Transverse colon (tissue), 4 donors: ENCODE measurements at regions of chr20 and their contacts with region 1.

Region 1: DNA sequence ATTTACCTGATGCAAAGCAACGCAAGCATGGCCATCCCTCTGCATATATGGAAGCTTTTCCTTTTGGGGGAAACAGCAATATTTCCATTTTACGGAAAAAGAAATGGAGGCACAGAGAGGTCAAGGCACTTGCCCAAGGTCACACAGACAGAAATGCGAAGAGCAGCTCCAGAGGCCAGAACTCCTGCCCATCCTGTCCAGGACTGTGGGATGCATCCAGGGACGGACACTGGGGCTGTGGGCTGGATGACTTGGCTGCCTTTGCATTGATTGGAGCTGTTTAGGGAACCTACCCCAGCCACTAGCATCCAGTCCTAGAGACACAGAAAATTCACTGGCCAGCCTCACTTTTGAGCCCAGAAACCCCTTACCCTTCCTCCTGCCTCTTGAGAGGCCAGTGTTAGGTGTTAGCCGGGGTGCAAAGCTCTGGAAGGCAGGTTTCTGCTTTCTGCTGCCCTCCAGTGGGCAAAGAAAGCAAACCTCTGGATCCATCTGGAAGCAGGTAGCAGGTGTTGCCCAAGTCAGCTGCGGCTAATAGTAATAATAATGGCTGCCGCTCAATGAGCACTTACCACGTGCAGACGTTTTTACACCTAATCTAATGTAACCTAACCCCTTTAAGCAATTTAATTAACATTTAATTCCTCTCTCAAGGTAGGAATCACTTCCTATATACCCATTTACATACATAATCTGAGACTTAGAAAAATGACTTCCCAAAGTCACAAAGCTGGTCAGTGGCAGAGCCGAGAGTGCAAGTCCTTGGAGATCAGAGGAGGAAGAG is 31.7 kb upstream of the CCN5 start:
- DNase-seq: peak; percentile 56
- H3K4me3 ChIP-seq: no peak overlapping the region
- H3K27ac ChIP-seq: no peak overlapping the region
- H3K4me1 ChIP-seq: peaks cover 0 to 9% (median 0%) of the 10 kb centered on the region in 4 donors
- H3K27me3 ChIP-seq: no peaks in the 10 kb centered on the region
- CTCF ChIP-seq: peak; percentile 28 to 66 (median 42)
- EP300 ChIP-seq: no peak
- POLR2A ChIP-seq: no peak

Region 2: GRCh38 chr20:44733341-44734069 is 50.0 kb after region 1 on chr20:
- in situ Hi-C with region 1: loop called (anchors 5 kb)
- intact Hi-C with region 1: loop called (anchors 2 kb)
- DNase-seq: peak; percentile 64
- H3K4me3 ChIP-seq: no peak overlapping the region
- H3K27ac ChIP-seq: no peak overlapping the region
- H3K4me1 ChIP-seq: peaks cover 0 to 6% (median 3%) of the 10 kb centered on the region in 4 donors
- H3K27me3 ChIP-seq: no peaks in the 10 kb centered on the region
- CTCF ChIP-seq: peak; percentile 80 to 87 (median 85)
- EP300 ChIP-seq: no peak
- POLR2A ChIP-seq: no peak

Region 3: GRCh38 chr20:44738813-44739477 is 55.5 kb after region 1 on chr20:
- in situ Hi-C with region 1: loop called (anchors 5 kb)
- intact Hi-C with region 1: no loop called
- DNase-seq: peak; percentile 42
- H3K4me3 ChIP-seq: no peak overlapping the region
- H3K27ac ChIP-seq: no peak overlapping the region
- H3K4me1 ChIP-seq: no peaks in the 10 kb centered on the region
- H3K27me3 ChIP-seq: peaks cover 6% of the 10 kb centered on the region
- CTCF ChIP-seq: no peak
- EP300 ChIP-seq: no peak
- POLR2A ChIP-seq: no peak

Region 4: DNA sequence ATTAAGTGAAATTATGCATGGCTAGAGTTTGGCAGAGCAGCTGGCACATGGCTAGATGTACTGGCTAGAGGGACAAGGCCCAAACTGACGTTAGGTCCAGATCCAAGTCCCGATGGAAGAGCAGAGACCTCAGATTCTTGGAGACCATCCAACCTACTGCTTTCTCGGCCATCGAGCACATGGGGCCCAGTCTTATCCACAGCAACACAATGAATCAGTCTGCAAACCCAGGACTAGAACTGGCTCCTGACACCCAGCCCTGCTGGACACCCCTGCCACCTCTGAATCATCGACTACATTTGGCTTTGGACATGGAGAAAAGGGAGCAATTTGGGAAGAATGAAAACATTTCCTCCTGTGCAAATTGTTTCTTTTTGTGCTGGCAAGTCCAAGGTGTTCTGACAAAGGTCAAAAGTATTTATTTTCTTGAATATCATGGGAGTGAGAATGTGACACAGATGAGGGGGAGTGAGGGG is 178.1 kb after region 1 on chr20:
- in situ Hi-C with region 1: loop called (anchors 5 to 25 kb)
- intact Hi-C with region 1: loop called (anchors 5 kb)
- DNase-seq: no peak
- H3K4me3 ChIP-seq: no peak overlapping the region
- H3K27ac ChIP-seq: no peak overlapping the region
- H3K4me1 ChIP-seq: peaks cover 0 to 25% (median 1%) of the 10 kb centered on the region in 4 donors
- H3K27me3 ChIP-seq: no peaks in the 10 kb centered on the region
- CTCF ChIP-seq: no peak
- EP300 ChIP-seq: no peak
- POLR2A ChIP-seq: no peak

Region 5: GRCh38 chr20:44866703-44867335 is 183.4 kb after region 1 on chr20:
- in situ Hi-C with region 1: loop called (anchors 5 to 25 kb)
- intact Hi-C with region 1: loop called (anchors 5 kb)
- DNase-seq: no peak
- H3K4me3 ChIP-seq: no peak overlapping the region
- H3K27ac ChIP-seq: no peak overlapping the region
- H3K4me1 ChIP-seq: peaks cover 0 to 14% (median 3%) of the 10 kb centered on the region in 4 donors
- H3K27me3 ChIP-seq: no peaks in the 10 kb centered on the region
- CTCF ChIP-seq: no peak
- EP300 ChIP-seq: no peak
- POLR2A ChIP-seq: no peak